ENCODE measurements at regions of chr18 and their contacts with region 1.

Region 1: DNA sequence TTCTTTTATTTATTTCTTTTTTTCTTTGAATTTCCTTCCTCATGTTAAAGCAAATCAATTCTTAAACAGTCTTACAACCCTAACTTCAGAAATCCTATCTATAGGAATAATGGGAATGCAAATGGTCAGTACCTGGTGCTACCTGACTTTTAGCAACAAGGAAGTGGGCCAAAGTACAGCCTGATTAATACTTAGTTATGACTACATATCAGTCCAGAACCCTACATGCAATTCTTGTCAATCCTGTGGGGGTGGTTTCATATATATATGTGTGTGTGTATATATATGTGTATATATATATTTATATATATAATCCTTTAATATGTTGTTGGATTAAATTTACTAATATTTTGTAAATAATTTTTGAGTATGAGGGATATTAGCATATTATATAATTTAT is 14.8 kb upstream of the TRAPPC8 start:
- DNase-seq: no peak
- H3K4me3 Mint-ChIP-seq: no peak overlapping the region
- H3K27ac Mint-ChIP-seq: no peak overlapping the region
- H3K4me1 Mint-ChIP-seq: no peaks in the 10 kb centered on the region
- H3K27me3 Mint-ChIP-seq: no peaks in the 10 kb centered on the region

Region 2: DNA sequence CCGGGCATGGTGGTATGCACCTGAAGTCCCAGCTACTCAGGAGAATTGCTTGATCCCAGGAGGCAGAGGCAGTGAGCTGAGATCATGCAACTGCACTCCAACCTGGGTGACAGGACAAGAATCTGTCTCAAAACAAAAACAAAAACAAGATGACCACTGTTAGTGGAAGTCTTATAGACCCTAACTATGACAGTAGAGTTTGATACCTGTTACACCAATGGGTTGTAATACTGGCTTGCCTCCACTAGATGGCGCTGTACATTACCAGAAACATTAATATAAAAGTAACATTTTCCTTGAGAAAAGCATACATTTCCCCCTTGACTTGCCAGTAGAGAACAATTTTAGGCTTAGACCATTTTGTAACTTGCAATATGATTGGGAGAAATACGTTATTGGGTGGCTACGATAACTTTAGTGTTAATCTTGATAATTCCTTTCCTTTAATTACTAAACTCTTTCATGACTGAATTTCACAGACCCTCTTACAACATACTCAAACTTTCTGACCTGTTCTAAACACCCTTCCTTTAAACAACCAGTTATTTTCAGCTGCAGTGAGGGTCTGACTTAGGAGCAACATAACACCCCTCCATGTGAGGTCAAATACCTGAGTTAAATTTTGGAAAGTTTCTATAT is 216.5 kb before region 1 on chr18:
- intact Hi-C with region 1: loop called (anchors 1 kb)
- DNase-seq: no peak
- H3K4me3 Mint-ChIP-seq: no peak overlapping the region
- H3K27ac Mint-ChIP-seq: no peak overlapping the region
- H3K4me1 Mint-ChIP-seq: no peaks in the 10 kb centered on the region
- H3K27me3 Mint-ChIP-seq: peaks cover 2% of the 10 kb centered on the region

Region 3: GRCh38 chr18:31819106-31819924 is 138.4 kb before region 1 on chr18:
- intact Hi-C with region 1: loop called (anchors 1 kb)
- DNase-seq: no peak
- H3K4me3 Mint-ChIP-seq: no peak overlapping the region
- H3K27ac Mint-ChIP-seq: no peak overlapping the region
- H3K4me1 Mint-ChIP-seq: no peaks in the 10 kb centered on the region
- H3K27me3 Mint-ChIP-seq: peaks cover 1% of the 10 kb centered on the region

Region 4: GRCh38 chr18:31860488-31860887 is 97.2 kb before region 1 on chr18:
- intact Hi-C with region 1: loop called (anchors 5 kb)
- DNase-seq: no peak
- H3K4me3 Mint-ChIP-seq: no peak overlapping the region
- H3K27ac Mint-ChIP-seq: no peak overlapping the region
- H3K4me1 Mint-ChIP-seq: no peaks in the 10 kb centered on the region
- H3K27me3 Mint-ChIP-seq: no peaks in the 10 kb centered on the region

Region 5: GRCh38 chr18:31942999-31943865 is 14.5 kb before region 1 on chr18 and contains the start of gene TRAPPC8:
- intact Hi-C with region 1: loop called (anchors 1 kb)
- DNase-seq: peak; percentile 86
- H3K4me3 Mint-ChIP-seq: peak within 1 kb of the TSS; percentile 97
- H3K27ac Mint-ChIP-seq: peak within 1 kb of the TSS; percentile 95
- H3K4me1 Mint-ChIP-seq: peaks cover 40% of the 10 kb centered on the region
- H3K27me3 Mint-ChIP-seq: no peaks in the 10 kb centered on the region
- total RNA-seq, gene TRAPPC8: 36.7 and 41.6 TPM in 2 replicates

Region 6: DNA sequence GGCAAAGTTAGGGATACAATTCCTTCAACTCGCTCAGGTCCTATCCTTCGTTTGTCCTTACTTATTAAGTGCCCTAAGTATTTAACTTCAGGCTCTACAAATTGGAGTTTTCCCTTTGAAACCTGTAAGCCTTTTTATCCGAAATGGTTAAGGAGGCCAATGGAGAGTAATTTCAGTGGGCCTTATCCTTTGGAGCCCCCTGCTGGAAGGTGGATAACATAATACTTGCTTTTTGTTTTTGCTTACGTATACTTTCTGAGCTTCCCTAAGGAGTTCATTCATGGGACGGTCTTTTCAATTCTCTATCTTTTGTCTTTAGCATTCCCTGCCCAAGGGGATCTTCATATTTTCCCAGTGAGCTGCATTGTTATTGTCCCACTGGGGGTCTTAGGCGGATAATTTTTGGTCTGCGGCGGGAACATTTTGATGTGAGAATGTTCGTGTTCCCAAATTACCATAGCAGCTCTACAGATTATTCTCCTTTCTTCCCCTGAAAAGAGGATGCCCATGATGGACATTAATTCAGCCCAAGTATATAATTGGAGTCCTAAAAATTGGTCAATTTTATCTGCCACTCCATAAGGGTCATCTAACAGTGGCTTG is 19.6 kb after region 1 on chr18:
- intact Hi-C with region 1: no loop called
- DNase-seq: no peak
- H3K4me3 Mint-ChIP-seq: no peak overlapping the region
- H3K27ac Mint-ChIP-seq: no peak overlapping the region
- H3K4me1 Mint-ChIP-seq: no peaks in the 10 kb centered on the region
- H3K27me3 Mint-ChIP-seq: peaks cover 4% of the 10 kb centered on the region

Region 7: GRCh38 chr18:31996007-31996406 is 38.3 kb after region 1 on chr18:
- intact Hi-C with region 1: no loop called
- DNase-seq: no peak
- H3K4me3 Mint-ChIP-seq: no peak overlapping the region
- H3K27ac Mint-ChIP-seq: no peak overlapping the region
- H3K4me1 Mint-ChIP-seq: no peaks in the 10 kb centered on the region
- H3K27me3 Mint-ChIP-seq: peaks cover 4% of the 10 kb centered on the region

Region 8: GRCh38 chr18:32175265-32175664 is 217.5 kb after region 1 on chr18:
- intact Hi-C with region 1: no loop called
- DNase-seq: no peak
- H3K4me3 Mint-ChIP-seq: no peak overlapping the region
- H3K27ac Mint-ChIP-seq: no peak overlapping the region
- H3K4me1 Mint-ChIP-seq: no peaks in the 10 kb centered on the region
- H3K27me3 Mint-ChIP-seq: peaks cover 3% of the 10 kb centered on the region

Measured in activated T-helper 1 cell treated with anti-CD3 and anti-CD28 coated beads, Interleukin-12 subunit alpha, Interleukin-12 subunit beta, Interleukin-2, Interleukin-4 antibody, amounts not matched to agents 30 ng/mL and 10 ng/mL and 1 ng/mL, durations not matched to agents 14 hours and 24 hours and 36 hours (primary cell).